Mammary epithelial cell (primary cell): ENCODE measurements at regions of chr20 and their contacts with region 1.

Region 1: DNA sequence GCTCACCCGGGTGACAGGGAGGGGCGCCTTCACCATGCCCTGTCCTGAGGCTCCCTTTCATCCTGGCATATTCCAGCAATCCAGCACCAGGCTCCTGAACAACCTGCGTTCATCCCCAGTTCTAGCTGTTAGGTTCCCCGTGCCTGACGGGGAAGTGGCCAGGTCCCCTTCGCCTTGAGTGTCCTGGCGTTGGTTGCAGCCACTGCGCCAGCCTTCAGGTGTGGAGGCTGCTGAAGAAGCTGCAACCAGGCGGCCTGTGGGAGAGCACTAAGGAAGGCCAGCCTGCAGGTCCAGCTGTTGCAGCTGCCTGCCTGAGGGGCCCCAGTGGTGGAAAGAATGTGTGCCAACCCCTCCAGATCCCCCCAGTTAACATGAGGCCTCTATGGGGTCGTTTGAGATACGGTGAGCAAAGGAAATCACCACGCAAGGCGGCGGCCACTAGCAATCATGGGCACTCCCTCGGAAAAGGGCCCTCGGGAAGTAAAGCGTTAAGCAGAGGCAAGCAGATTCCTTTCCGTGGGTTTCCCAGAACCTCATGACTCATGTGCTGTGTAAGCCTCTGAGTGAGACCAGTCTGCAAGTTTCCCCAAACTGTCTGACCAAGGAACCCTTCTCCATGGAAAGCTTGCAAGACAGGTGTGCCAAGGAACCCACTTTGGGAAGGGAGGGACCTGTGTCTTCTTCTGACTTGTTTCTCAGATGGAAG is 320.8 kb downstream of the TAF4 start:
- DNase-seq: peak; percentile 19
- H3K4me3 ChIP-seq: no peak overlapping the region
- H3K27ac ChIP-seq: no peak overlapping the region
- H3K4me1 ChIP-seq: no peaks in the 10 kb centered on the region
- H3K27me3 ChIP-seq: no peaks in the 10 kb centered on the region
- CTCF ChIP-seq: no peak

Region 2: DNA sequence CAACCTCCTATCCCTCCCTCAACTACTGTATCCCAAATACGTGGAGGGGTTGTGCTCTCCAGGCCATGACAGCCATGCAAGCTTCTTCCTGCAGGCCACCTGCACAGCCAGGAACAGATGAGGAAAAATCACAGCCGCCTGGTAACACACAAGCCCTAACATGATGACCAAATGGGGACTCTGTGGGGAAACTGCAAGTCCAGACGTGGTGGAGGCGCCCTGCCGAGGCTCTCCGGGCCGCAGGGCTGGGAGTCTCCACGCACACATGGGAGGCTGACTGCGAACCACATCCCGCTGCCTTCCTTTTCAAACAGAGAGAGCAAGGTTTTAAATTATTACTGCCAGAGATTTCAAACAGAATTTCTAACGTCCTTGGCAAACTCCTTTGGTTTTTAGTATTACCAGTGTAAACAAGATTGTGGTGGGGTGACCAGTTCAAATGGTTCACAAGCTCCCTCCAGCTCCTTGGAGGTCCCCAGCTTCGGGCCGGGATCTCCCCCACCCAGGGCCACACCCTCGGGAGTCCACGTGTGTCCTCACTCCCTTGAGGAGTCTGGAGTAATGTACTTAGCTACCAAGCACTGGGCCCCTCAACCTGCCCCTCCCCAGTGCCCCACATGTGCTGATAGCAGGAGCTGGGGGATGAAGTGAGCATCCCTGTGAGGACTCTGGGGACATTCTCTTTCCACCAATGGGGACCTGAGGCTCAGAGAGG is 68.1 kb after region 1 on chr20:
- CTCF ChIA-PET with region 1: no interaction called
- dilution Hi-C with region 1: loop called (anchors 5 kb)
- in situ Hi-C with region 1: no loop called
- intact Hi-C with region 1: no loop called
- DNase-seq: peak; percentile 71
- H3K4me3 ChIP-seq: no peak overlapping the region
- H3K27ac ChIP-seq: no peak overlapping the region
- H3K4me1 ChIP-seq: peaks cover 12% of the 10 kb centered on the region
- H3K27me3 ChIP-seq: no peaks in the 10 kb centered on the region
- CTCF ChIP-seq: no peak